IMR-90 (cell line): ENCODE measurements at regions of chr1 and their contacts with region 1.

Region 1: DNA sequence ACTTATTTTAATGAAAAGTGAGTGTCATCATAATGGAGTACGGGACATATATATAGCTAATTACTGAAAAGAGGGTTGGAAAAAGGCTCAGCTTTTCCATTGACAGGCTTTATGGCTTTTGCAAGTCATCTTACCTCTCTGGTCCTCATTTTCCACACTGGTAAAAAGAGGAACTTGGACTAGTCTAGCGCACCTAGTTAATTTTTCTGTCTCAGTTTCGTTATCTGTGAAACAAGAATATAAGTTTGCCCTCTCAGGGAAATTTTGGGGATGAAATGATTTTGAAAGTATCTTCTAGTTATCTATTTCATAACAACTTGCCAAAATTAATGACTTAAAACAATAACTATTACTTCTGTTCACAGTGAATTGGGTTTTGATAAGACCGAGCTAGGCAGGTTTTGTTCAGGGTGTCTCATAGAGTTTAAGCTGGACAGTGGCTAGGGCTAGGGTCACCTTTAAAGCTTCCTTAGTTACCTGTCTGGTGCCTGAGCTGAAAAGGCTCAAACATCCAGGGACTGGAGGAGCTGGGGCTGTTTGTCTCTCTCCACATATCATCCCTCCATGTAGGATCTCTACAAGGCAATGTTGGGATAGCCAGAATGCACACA is 91.7 kb downstream of the TYW3 start:
- DNase-seq: no peak
- ATAC-seq: no peak
- H3K4me3 ChIP-seq: no peak overlapping the region
- H3K27ac ChIP-seq: no peak overlapping the region
- H3K4me1 ChIP-seq: peaks cover 3% of the 10 kb centered on the region; the same call in 1 of the 2 replicates
- H3K27me3 ChIP-seq: no peaks in the 10 kb centered on the region
- CTCF ChIP-seq: no peak
- POLR2A ChIP-seq: no peak
- RAD21 ChIP-seq: no peak

Region 2: GRCh38 chr1:73765551-73766233 is 1058.9 kb before region 1 on chr1:
- CTCF ChIA-PET with region 1: no interaction called
- POLR2A ChIA-PET with region 1: no interaction called
- dilution Hi-C with region 1: no loop called
- in situ Hi-C with region 1: no loop called
- intact Hi-C with region 1: no loop called
- DNase-seq: no peak
- ATAC-seq: no peak
- H3K4me3 ChIP-seq: no peak overlapping the region
- H3K27ac ChIP-seq: no peak overlapping the region
- H3K4me1 ChIP-seq: no peaks in the 10 kb centered on the region
- H3K27me3 ChIP-seq: no peaks in the 10 kb centered on the region
- CTCF ChIP-seq: no peak
- POLR2A ChIP-seq: no peak
- RAD21 ChIP-seq: no peak

Region 3: GRCh38 chr1:74699331-74699730 is 125.3 kb before region 1 on chr1:
- CTCF ChIA-PET with region 1: no interaction called
- POLR2A ChIA-PET with region 1: no interaction called
- dilution Hi-C with region 1: no loop called
- in situ Hi-C with region 1: no loop called
- intact Hi-C with region 1: no loop called
- DNase-seq: no peak
- ATAC-seq: no peak
- H3K4me3 ChIP-seq: no peak overlapping the region
- H3K27ac ChIP-seq: no peak overlapping the region
- H3K4me1 ChIP-seq: no peaks in the 10 kb centered on the region
- H3K27me3 ChIP-seq: no peaks in the 10 kb centered on the region
- CTCF ChIP-seq: no peak
- POLR2A ChIP-seq: no peak
- RAD21 ChIP-seq: no peak

Region 4: DNA sequence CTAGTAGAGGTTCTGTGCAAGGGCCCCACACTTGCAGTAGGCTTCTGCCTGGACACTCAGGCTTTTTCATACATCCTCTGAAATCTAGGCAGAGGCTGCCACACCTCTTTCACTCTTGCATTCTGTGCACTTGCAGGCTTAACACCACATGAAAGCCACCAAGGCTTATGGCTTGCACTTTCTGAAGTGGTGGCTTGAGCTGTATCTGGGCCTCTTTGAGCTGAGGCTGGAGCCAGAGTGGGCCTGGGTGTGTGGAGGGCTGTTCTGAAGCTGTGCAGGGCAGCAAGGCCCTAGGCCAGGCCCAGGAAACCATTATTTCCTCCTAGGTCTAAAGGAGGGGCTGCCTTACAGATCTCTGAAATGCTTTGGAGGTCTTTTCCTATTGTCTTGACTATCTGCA is 25.5 kb before region 1 on chr1:
- CTCF ChIA-PET with region 1: no interaction called
- POLR2A ChIA-PET with region 1: no interaction called
- dilution Hi-C with region 1: no loop called
- in situ Hi-C with region 1: no loop called
- intact Hi-C with region 1: loop called (anchors 2 kb)
- DNase-seq: no peak
- ATAC-seq: no peak
- H3K4me3 ChIP-seq: no peak overlapping the region
- H3K27ac ChIP-seq: no peak overlapping the region
- H3K4me1 ChIP-seq: no peaks in the 10 kb centered on the region
- H3K27me3 ChIP-seq: no peaks in the 10 kb centered on the region
- CTCF ChIP-seq: no peak
- POLR2A ChIP-seq: no peak
- RAD21 ChIP-seq: no peak